Body of pancreas (tissue), 4 donors: ENCODE measurements at regions of chr18 and their contacts with region 1.

Region 1: GRCh38 chr18:58781627-58782194 is 83.0 kb upstream of the ZNF532 start:
- DNase-seq: peak; percentile 73 to 79 (median 76)
- ATAC-seq: peak; percentile 77
- H3K4me3 ChIP-seq: no peak overlapping the region
- H3K27ac ChIP-seq: no peak overlapping the region
- H3K4me1 ChIP-seq: peaks cover 13% of the 10 kb centered on the region
- H3K27me3 ChIP-seq: no peaks in the 10 kb centered on the region
- CTCF ChIP-seq: peak; percentile 58 to 98 (median 83)
- POLR2A ChIP-seq: no peak

Region 2: DNA sequence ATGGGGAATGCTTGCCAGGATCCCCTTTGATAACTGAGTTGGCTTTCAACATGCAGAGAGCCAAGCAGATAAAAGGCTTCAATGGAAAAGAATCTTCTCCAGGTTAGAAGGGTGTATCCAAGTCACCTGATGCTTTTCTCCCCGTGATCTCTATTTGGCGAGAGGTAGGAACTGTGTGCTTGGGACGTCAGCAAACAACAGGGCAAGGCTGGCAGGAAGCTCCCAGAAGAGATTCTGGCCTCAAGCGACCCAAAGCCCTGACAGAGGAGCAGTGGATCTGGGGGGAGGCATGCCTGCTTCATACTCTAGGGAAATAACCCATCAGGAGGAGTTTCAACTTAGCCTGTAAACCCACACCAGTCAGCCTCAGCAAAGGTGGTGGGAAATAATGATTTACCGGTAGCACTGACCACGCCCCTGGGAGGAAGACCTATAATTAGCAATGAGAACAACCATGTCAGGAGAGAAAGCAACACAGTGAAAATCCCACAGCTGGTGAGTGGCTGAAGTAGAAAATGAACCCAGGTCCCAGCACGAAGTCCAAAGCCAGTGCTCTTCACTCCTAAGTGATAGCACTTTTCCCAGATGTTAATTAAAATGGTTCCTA is 281.7 kb after region 1 on chr18:
- intact Hi-C with region 1: loop called (anchors 5 kb)
- DNase-seq: no peak
- ATAC-seq: no peak
- H3K4me3 ChIP-seq: no peak overlapping the region
- H3K27ac ChIP-seq: no peak overlapping the region
- H3K4me1 ChIP-seq: no peaks in the 10 kb centered on the region
- H3K27me3 ChIP-seq: no peaks in the 10 kb centered on the region
- CTCF ChIP-seq: no peak
- POLR2A ChIP-seq: no peak

Region 3: DNA sequence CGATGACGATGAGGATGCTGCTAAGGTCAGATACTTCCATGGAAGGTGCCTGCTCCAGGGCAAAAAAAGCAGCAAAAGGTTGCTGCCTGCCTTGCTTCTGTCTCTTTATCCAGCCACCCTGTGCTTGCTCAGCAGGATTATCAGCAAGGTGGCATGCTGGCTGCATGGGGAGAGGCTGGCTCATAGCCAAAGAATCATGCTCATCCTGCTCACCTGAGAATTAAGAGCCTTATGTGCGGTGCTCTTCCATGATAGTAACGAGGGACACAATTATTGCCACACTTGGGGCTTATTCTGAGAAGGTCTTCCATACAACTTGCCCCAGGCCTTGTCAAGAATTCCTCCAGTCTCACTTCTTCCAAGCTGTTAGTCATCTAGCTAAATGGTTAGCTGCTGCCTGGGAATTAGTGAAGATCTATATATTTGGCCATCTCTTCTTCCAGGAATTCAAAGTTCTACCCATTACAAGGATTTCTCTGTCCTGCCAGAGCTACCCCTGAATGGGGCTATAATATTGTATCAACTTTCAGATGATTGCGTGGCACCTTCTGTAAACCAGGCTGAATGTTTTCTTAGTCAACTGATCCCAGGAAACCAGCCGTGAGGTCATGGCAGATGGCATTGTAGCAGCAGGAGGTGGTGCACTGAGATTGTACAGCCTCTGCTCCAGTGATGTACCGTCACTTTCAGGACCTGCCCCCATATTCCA is 297.7 kb after region 1 on chr18:
- intact Hi-C with region 1: loop called (anchors 5 kb)
- DNase-seq: peak in 1 of 4 donors; percentile 22
- ATAC-seq: no peak
- H3K4me3 ChIP-seq: no peak overlapping the region
- H3K27ac ChIP-seq: no peak overlapping the region
- H3K4me1 ChIP-seq: no peaks in the 10 kb centered on the region
- H3K27me3 ChIP-seq: no peaks in the 10 kb centered on the region
- CTCF ChIP-seq: no peak
- POLR2A ChIP-seq: no peak